Activated B cell treated with CpG ODN at 0.5 μM for 24 hours (primary cell): ENCODE measurements at regions of chr6 and their contacts with region 1.

Region 1: GRCh38 chr6:32785781-32786533 is 22.6 kb upstream of the HLA-DQB2 start:
- DNase-seq: no peak
- ATAC-seq: peak; percentile 88
- H3K4me3 Mint-ChIP-seq: no peak overlapping the region
- H3K27ac Mint-ChIP-seq: no peak overlapping the region
- H3K4me1 Mint-ChIP-seq: peaks cover 2% of the 10 kb centered on the region
- H3K27me3 Mint-ChIP-seq: no peaks in the 10 kb centered on the region
- CTCF ChIP-seq: no peak

Region 2: GRCh38 chr6:32244946-32245398 is 541.0 kb before region 1 on chr6:
- CTCF ChIA-PET with region 1: interaction called, 31 read pairs
- POLR2A ChIA-PET with region 1: no interaction called
- intact Hi-C with region 1: no loop called
- DNase-seq: peak; percentile 77
- ATAC-seq: peak; percentile 91
- H3K4me3 Mint-ChIP-seq: peak overlapping the region; percentile 81
- H3K27ac Mint-ChIP-seq: peak overlapping the region; percentile 50
- H3K4me1 Mint-ChIP-seq: peaks cover 16% of the 10 kb centered on the region
- H3K27me3 Mint-ChIP-seq: no peaks in the 10 kb centered on the region
- CTCF ChIP-seq: no peak

Region 3: GRCh38 chr6:32432050-32432450 is 353.9 kb before region 1 on chr6:
- CTCF ChIA-PET with region 1: interaction called, 43 read pairs
- POLR2A ChIA-PET with region 1: no interaction called
- intact Hi-C with region 1: loop called (anchors 1 kb)
- DNase-seq: no peak
- ATAC-seq: peak; percentile 43
- H3K4me3 Mint-ChIP-seq: no peak overlapping the region
- H3K27ac Mint-ChIP-seq: peak overlapping the region; percentile 24
- H3K4me1 Mint-ChIP-seq: peaks cover 33% of the 10 kb centered on the region
- H3K27me3 Mint-ChIP-seq: no peaks in the 10 kb centered on the region
- CTCF ChIP-seq: peak; percentile 65

Region 4: GRCh38 chr6:32718879-32719278 is 67.1 kb before region 1 on chr6:
- CTCF ChIA-PET with region 1: interaction called, 3 read pairs
- POLR2A ChIA-PET with region 1: no interaction called
- intact Hi-C with region 1: loop called (anchors 5 kb)
- DNase-seq: no peak
- ATAC-seq: no peak
- H3K4me3 Mint-ChIP-seq: no peak overlapping the region
- H3K27ac Mint-ChIP-seq: no peak overlapping the region
- H3K4me1 Mint-ChIP-seq: no peaks in the 10 kb centered on the region
- H3K27me3 Mint-ChIP-seq: peaks cover 8% of the 10 kb centered on the region
- CTCF ChIP-seq: no peak